CD8-positive, alpha-beta T cell (primary cell): ENCODE measurements at regions of chr17 and their contacts with region 1.

Region 1: GRCh38 chr17:59106463-59107305 is at the start of gene TRIM37:
- DNase-seq: peak; percentile 97 to 100 (median 98)
- ATAC-seq: peak; percentile 96
- H3K4me3 ChIP-seq: peak within 1 kb of the TSS; percentile 89 to 93
- H3K4me3 Mint-ChIP-seq: peak within 1 kb of the TSS; percentile 92
- H3K27ac ChIP-seq: peak within 1 kb of the TSS; percentile 87 to 88
- H3K27ac Mint-ChIP-seq: peak within 1 kb of the TSS; percentile 91
- H3K4me1 ChIP-seq: peaks cover 26% of the 10 kb centered on the region
- H3K4me1 Mint-ChIP-seq: peaks cover 38% of the 10 kb centered on the region
- H3K27me3 ChIP-seq: no peaks in the 10 kb centered on the region
- H3K27me3 Mint-ChIP-seq: no peaks in the 10 kb centered on the region
- CTCF ChIP-seq: no peak
- total RNA-seq, gene TRIM37: 17.7 to 20.9 TPM

Region 2: GRCh38 chr17:58082870-58083490 is 1023.7 kb before region 1 on chr17 and contains the start of gene DYNLL2:
- CTCF ChIA-PET with region 1: no interaction called
- POLR2A ChIA-PET with region 1: no interaction called
- intact Hi-C with region 1: loop called in 1 of 2 experiments (anchors 10 kb)
- DNase-seq: peak; percentile 76 to 93 (median 88)
- ATAC-seq: peak; percentile 69
- H3K4me3 ChIP-seq: peak within 1 kb of the TSS; percentile 60 to 62
- H3K4me3 Mint-ChIP-seq: peak within 1 kb of the TSS; percentile 89
- H3K27ac ChIP-seq: peak within 1 kb of the TSS; percentile 81 to 85
- H3K27ac Mint-ChIP-seq: peak within 1 kb of the TSS; percentile 88
- H3K4me1 ChIP-seq: peaks cover 33% of the 10 kb centered on the region
- H3K4me1 Mint-ChIP-seq: peaks cover 33% of the 10 kb centered on the region
- H3K27me3 ChIP-seq: no peaks in the 10 kb centered on the region
- H3K27me3 Mint-ChIP-seq: no peaks in the 10 kb centered on the region
- CTCF ChIP-seq: no peak
- total RNA-seq, gene DYNLL2: 30.5 to 30.6 TPM

Region 3: GRCh38 chr17:58631523-58632323 is 475.0 kb before region 1 on chr17:
- CTCF ChIA-PET with region 1: no interaction called
- POLR2A ChIA-PET with region 1: no interaction called
- intact Hi-C with region 1: loop called in 1 of 2 experiments (anchors 5 kb)
- DNase-seq: peak; percentile 84 to 97 (median 91)
- ATAC-seq: peak; percentile 88
- H3K4me3 ChIP-seq: peak overlapping the region; percentile 48 to 50
- H3K4me3 Mint-ChIP-seq: no peak overlapping the region
- H3K27ac ChIP-seq: peak overlapping the region; percentile 95 to 97
- H3K27ac Mint-ChIP-seq: no peak overlapping the region
- H3K4me1 ChIP-seq: peaks cover 13% of the 10 kb centered on the region
- H3K4me1 Mint-ChIP-seq: peaks cover 2% of the 10 kb centered on the region
- H3K27me3 ChIP-seq: no peaks in the 10 kb centered on the region
- H3K27me3 Mint-ChIP-seq: no peaks in the 10 kb centered on the region
- CTCF ChIP-seq: no peak

Region 4: DNA sequence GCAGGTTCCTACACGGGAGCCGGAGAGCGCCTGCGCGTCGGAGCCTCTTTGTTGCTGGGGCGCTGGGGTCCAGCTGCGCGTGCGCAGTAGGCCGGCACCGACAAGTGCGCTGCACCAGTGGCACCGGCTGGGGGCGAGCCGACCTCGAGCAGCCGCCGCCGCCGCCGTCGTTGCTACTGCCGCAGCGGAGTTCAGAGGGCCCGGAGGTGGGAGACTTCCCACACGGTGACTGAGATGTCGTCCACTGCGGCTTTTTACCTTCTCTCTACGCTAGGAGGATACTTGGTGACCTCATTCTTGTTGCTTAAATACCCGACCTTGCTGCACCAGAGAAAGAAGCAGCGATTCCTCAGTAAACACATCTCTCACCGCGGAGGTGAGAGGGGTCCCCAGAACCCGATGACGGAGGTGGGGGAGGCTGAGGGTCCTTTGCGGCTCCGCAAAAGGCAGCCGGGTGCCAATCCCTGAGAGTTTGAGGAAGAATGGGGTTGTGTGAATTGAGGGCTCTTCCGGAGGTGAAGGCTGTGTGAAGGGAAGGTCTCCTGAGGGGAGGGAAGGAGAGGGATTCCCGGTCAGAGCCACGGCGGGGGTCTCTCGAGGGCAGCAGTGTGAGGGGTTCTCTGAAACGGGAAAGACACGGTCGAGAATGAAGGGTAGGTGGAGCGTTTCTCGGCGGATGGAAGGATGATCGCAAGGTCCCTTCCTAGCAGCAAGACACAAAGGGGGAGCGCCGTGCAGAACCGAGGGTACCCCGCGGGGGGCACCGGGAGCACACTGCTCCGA is 113.9 kb after region 1 on chr17 and contains the start of gene GDPD1:
- CTCF ChIA-PET with region 1: interaction called, 4 read pairs
- POLR2A ChIA-PET with region 1: no interaction called
- intact Hi-C with region 1: loop called (anchors 1 to 2 kb)
- DNase-seq: peak; percentile 94 to 99 (median 97)
- ATAC-seq: peak; percentile 96
- H3K4me3 ChIP-seq: peak within 1 kb of the TSS; percentile 97 to 100
- H3K4me3 Mint-ChIP-seq: peak within 1 kb of the TSS; percentile 98
- H3K27ac ChIP-seq: peak within 1 kb of the TSS; percentile 91 to 92
- H3K27ac Mint-ChIP-seq: peak within 1 kb of the TSS; percentile 99
- H3K4me1 ChIP-seq: peaks cover 4% of the 10 kb centered on the region
- H3K4me1 Mint-ChIP-seq: peaks cover 13% of the 10 kb centered on the region
- H3K27me3 ChIP-seq: no peaks in the 10 kb centered on the region
- H3K27me3 Mint-ChIP-seq: no peaks in the 10 kb centered on the region
- CTCF ChIP-seq: peak; percentile 71
- total RNA-seq, gene GDPD1: 1.1 to 1.8 TPM

Region 5: GRCh38 chr17:59619293-59620063 is 512.8 kb after region 1 on chr17 and contains the start of gene CLTC:
- CTCF ChIA-PET with region 1: no interaction called
- POLR2A ChIA-PET with region 1: no interaction called
- intact Hi-C with region 1: loop called in 1 of 2 experiments (anchors 1 kb)
- DNase-seq: peak; percentile 83 to 98 (median 90)
- ATAC-seq: peak; percentile 82
- H3K4me3 ChIP-seq: peak within 1 kb of the TSS; percentile 98 to 99
- H3K4me3 Mint-ChIP-seq: peak within 1 kb of the TSS; percentile 96
- H3K27ac ChIP-seq: peak within 1 kb of the TSS; percentile 91 to 99
- H3K27ac Mint-ChIP-seq: peak within 1 kb of the TSS; percentile 98
- H3K4me1 ChIP-seq: peaks cover 37% of the 10 kb centered on the region
- H3K4me1 Mint-ChIP-seq: peaks cover 48% of the 10 kb centered on the region
- H3K27me3 ChIP-seq: no peaks in the 10 kb centered on the region
- H3K27me3 Mint-ChIP-seq: no peaks in the 10 kb centered on the region
- CTCF ChIP-seq: no peak
- total RNA-seq, gene CLTC: 73.4 to 86.0 TPM

Region 6: DNA sequence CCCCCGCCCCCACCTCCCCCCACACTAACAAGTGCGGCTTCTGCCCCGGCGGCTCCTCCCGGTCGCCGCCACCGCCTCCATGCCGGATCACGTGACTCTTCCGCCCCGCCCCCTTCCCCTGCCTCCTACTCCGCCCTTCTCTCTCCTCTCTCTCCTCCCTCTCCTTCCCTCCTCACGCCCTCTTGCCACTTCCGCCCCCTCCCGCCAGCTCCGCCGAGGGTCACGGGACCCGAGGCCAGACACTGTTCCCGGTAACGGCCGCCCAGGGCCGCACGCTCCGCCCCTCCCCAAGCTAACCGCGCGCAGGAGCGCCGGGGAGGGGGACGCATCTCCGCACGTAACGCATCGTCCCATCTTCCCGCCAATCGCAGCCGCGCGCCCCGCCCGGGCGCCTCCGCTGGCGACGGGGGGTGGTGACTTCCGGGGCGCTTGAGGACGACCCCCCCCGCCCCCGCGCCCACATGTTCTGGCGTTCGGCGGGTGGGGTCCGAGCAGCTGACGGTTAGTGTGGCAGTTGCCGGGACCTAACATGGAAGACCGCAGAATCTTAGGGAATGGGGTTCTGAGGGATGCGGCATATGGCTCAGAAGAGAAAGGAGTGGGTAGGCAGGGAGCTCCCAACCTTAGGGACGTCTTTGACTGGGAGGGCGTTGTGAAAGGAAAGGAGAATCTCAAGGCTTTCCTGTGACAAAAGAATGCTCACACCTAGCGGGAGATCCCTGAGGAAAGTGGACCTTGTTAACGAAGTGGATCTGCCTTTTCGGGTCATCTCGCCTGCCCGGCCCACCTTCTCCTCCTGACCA is 1285.6 kb after region 1 on chr17 and contains the start of gene USP32:
- CTCF ChIA-PET with region 1: no interaction called
- POLR2A ChIA-PET with region 1: no interaction called
- intact Hi-C with region 1: loop called in 1 of 2 experiments (anchors 10 kb)
- DNase-seq: peak; percentile 93 to 99 (median 97)
- ATAC-seq: peak; percentile 87
- H3K4me3 ChIP-seq: peak within 1 kb of the TSS; percentile 86 to 93
- H3K4me3 Mint-ChIP-seq: peak within 1 kb of the TSS; percentile 95
- H3K27ac ChIP-seq: peak within 1 kb of the TSS; percentile 89 to 90
- H3K27ac Mint-ChIP-seq: peak within 1 kb of the TSS; percentile 93
- H3K4me1 ChIP-seq: peaks cover 18% of the 10 kb centered on the region
- H3K4me1 Mint-ChIP-seq: peaks cover 38% of the 10 kb centered on the region
- H3K27me3 ChIP-seq: no peaks in the 10 kb centered on the region
- H3K27me3 Mint-ChIP-seq: no peaks in the 10 kb centered on the region
- CTCF ChIP-seq: no peak
- total RNA-seq, gene USP32: 24.7 to 26.3 TPM